Heart right ventricle (tissue), 16 donors: ENCODE measurements at regions of chr14 and their contacts with region 1.

Region 1: DNA sequence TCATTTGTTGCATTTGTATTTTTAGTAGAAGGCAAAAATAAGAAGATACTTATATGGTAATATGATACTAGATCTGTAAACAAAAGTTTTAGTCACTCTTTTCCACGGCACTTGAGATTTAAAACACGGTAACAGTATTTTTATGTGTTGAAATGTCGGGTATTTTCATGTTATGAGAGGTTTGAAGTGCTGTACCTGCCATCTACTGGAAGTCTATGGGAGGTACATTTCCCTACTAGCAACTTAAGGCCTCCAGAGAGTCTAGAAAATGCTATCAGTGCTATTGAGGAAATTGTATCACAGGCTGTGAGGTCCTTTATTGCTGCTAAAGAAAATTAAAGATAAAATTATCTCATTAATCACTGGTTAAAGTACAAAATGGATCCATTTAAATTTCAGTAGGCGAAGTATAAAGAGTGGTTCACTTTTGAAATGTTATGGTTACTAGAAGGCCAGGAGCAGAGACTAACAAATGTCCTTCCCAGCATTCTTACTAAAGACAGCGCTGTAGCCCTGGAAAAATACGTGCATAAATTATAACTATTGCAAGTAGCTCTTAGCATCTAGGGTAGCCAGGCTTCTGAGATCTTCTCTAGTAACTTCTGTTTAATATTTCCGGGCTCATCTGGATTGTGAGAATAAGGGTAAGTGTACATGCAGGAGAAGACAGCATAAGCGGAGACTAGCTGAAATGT is 77.6 kb upstream of the PRKD1 start:
- DNase-seq: no peak
- ATAC-seq: peak in 7 of 8 donors; percentile 43 to 82 (median 62)
- H3K4me3 ChIP-seq: no peak overlapping the region
- H3K27ac ChIP-seq: no peak overlapping the region
- H3K4me1 ChIP-seq: no peaks in the 10 kb centered on the region
- H3K27me3 ChIP-seq: no peaks in the 10 kb centered on the region
- CTCF ChIP-seq: peak; percentile 57 to 88 (median 80)

Region 2: GRCh38 chr14:29548948-29549370 is 456.3 kb before region 1 on chr14:
- intact Hi-C with region 1: loop called (anchors 1 to 5 kb)
- DNase-seq: peak in 1 of 2 donors; percentile 15
- ATAC-seq: peak in 7 of 8 donors; percentile 61 to 82 (median 73)
- H3K4me3 ChIP-seq: no peak overlapping the region
- H3K27ac ChIP-seq: no peak overlapping the region
- H3K4me1 ChIP-seq: peaks cover 0 to 5% (median 0%) of the 10 kb centered on the region in 9 donors
- H3K27me3 ChIP-seq: peaks cover 0 to 1% (median 0%) of the 10 kb centered on the region in 7 donors
- CTCF ChIP-seq: peak; percentile 44 to 74 (median 67)

Region 3: GRCh38 chr14:29710015-29710565 is 295.2 kb before region 1 on chr14:
- intact Hi-C with region 1: loop called in 5 of 10 experiments (anchors 2 to 10 kb)
- DNase-seq: no peak
- ATAC-seq: no peak
- H3K4me3 ChIP-seq: no peak overlapping the region
- H3K27ac ChIP-seq: no peak overlapping the region
- H3K4me1 ChIP-seq: no peaks in the 10 kb centered on the region
- H3K27me3 ChIP-seq: no peaks in the 10 kb centered on the region
- CTCF ChIP-seq: peak; percentile 7 to 60 (median 39)

Region 4: GRCh38 chr14:30283826-30284446 is 278.7 kb after region 1 on chr14:
- intact Hi-C with region 1: no loop called
- DNase-seq: no peak
- ATAC-seq: no peak
- H3K4me3 ChIP-seq: no peak overlapping the region
- H3K27ac ChIP-seq: no peak overlapping the region
- H3K4me1 ChIP-seq: no peaks in the 10 kb centered on the region
- H3K27me3 ChIP-seq: no peaks in the 10 kb centered on the region
- CTCF ChIP-seq: peak in 7 of 9 donors; percentile 32 to 56 (median 48)